Activated CD8-positive, alpha-beta T cell treated with anti-CD3 and anti-CD28 coated beads for 36 hours (primary cell): ENCODE measurements at regions of chr14 and their contacts with region 1.

Region 1: DNA sequence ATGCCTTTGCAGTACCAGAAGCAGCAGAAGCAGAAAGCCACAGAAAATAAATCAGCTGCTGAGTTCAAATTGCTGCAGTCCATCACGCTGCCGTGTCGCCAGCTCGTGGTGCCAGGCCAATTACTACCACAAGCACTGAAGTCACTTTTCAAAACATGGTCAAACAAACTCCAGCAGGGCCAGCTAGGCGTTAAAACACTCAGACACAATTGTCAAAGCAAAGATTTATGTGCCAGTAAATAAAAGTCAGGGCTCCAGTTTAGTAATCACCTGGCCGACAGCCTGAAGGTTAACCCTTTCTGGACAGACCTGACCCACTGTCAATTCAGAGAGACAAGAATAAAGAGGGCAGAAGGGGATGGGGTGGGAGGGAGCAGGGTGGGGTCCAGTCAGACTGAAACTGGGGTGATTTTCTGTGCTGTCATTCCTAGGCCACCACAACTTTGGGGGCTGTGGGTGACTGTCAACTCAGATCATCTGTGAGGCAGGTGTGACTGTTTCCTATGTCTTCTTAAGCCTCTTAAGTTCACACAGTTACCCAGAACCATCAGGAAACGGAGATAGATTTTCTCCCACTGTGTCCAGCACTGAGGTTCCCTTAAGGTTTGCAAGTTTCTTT is 109.8 kb upstream of the FUT8 start:
- DNase-seq: peak; percentile 92
- ATAC-seq: peak; percentile 80
- H3K4me3 Mint-ChIP-seq: peak overlapping the region; percentile 61
- H3K27ac Mint-ChIP-seq: peak overlapping the region; percentile 80
- H3K4me1 Mint-ChIP-seq: peaks cover 71% of the 10 kb centered on the region
- H3K27me3 Mint-ChIP-seq: no peaks in the 10 kb centered on the region
- CTCF ChIP-seq: no peak

Region 2: DNA sequence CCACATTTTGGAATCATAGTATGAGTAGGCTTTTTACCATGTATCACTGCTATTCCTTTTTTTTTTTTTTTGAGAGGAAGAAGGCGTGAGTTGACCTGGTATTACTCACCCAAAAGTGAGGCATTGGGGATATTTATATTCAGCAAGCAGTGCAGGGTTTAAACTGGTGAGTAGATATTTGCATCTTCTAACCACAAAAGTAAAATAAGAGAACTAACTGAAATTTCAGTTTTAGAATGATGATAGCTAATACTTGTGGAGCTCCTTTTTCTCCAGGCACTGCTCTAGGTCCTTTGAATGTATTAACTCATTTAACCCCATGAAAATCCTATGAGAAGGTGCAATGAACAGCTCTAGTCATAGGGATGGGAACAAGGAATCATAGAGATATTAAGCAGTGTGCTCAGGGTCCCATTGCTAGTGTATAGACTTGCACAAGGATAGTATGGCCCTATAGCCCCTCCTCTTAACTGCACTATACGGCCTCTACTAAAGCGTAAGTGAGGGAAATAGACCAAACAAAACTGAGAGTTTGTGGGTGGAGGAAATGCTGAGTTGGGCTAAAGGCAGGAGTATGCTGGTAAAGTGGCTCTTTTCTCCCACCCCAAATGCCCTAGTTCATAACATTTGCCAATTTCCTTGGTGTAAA is 96.1 kb before region 1 on chr14:
- CTCF ChIA-PET with region 1: no interaction called
- POLR2A ChIA-PET with region 1: interaction called, 3 read pairs
- intact Hi-C with region 1: loop called (anchors 5 kb)
- DNase-seq: peak; percentile 57
- ATAC-seq: peak; percentile 78
- H3K4me3 Mint-ChIP-seq: peak overlapping the region; percentile 53
- H3K27ac Mint-ChIP-seq: peak overlapping the region; percentile 87
- H3K4me1 Mint-ChIP-seq: peaks cover 60% of the 10 kb centered on the region
- H3K27me3 Mint-ChIP-seq: no peaks in the 10 kb centered on the region
- CTCF ChIP-seq: no peak

Region 3: GRCh38 chr14:65336191-65336591 is 33.5 kb after region 1 on chr14:
- CTCF ChIA-PET with region 1: interaction called, 5 read pairs
- POLR2A ChIA-PET with region 1: interaction called, 3 read pairs
- intact Hi-C with region 1: loop called (anchors 5 kb)
- DNase-seq: peak; percentile 81
- ATAC-seq: peak; percentile 89
- H3K4me3 Mint-ChIP-seq: peak overlapping the region; percentile 80
- H3K27ac Mint-ChIP-seq: peak overlapping the region; percentile 94
- H3K4me1 Mint-ChIP-seq: peaks cover 56% of the 10 kb centered on the region
- H3K27me3 Mint-ChIP-seq: no peaks in the 10 kb centered on the region
- CTCF ChIP-seq: no peak

Region 4: GRCh38 chr14:65356327-65356852 is 53.7 kb after region 1 on chr14:
- CTCF ChIA-PET with region 1: no interaction called
- POLR2A ChIA-PET with region 1: no interaction called
- intact Hi-C with region 1: loop called (anchors 5 kb)
- DNase-seq: peak; percentile 58
- ATAC-seq: peak; percentile 55
- H3K4me3 Mint-ChIP-seq: no peak overlapping the region
- H3K27ac Mint-ChIP-seq: peak overlapping the region; percentile 64
- H3K4me1 Mint-ChIP-seq: peaks cover 43% of the 10 kb centered on the region
- H3K27me3 Mint-ChIP-seq: no peaks in the 10 kb centered on the region
- CTCF ChIP-seq: no peak